ENCODE measurements at regions of chr2 and their contacts with region 1.

Region 1: GRCh38 chr2:163155279-163155883 is 316.8 kb upstream of the KCNH7 start:
- DNase-seq: no peak
- H3K4me3 Mint-ChIP-seq: no peak overlapping the region
- H3K27ac Mint-ChIP-seq: no peak overlapping the region
- H3K4me1 Mint-ChIP-seq: no peaks in the 10 kb centered on the region
- H3K27me3 Mint-ChIP-seq: no peaks in the 10 kb centered on the region

Region 2: GRCh38 chr2:162430323-162430722 is 725.1 kb before region 1 on chr2:
- CTCF ChIA-PET with region 1: no interaction called
- intact Hi-C with region 1: no loop called
- DNase-seq: no peak
- H3K4me3 Mint-ChIP-seq: no peak overlapping the region
- H3K27ac Mint-ChIP-seq: no peak overlapping the region
- H3K4me1 Mint-ChIP-seq: no peaks in the 10 kb centered on the region
- H3K27me3 Mint-ChIP-seq: peaks cover 4% of the 10 kb centered on the region

Region 3: DNA sequence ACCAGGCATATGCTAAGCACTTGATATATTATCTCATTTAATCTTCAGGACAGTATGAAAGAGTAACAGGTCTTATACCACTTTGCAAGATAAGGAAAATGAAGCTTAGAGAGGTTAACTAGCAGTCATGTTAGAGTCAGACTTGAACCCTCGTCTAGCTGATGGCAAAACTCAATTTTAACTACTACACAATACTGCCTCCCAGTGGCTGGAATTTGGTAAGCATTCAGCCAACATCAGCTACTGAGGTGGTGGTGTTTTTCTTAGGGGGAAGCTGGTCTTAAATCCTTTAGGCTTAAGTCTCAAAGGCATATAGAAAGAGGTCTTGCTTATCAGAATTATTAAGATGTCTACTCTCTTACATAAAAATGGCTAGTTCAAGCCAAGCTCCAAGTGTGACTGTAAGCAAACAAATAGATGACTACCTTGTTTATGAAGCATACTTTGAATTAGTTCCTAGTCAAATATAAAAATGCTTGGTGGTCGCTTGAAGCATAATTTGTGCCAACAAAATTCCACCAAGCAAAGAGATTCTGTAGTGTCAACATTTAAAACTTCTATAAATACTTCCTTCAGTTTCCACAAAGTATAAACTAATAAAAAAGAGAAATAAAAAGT is 905.9 kb after region 1 on chr2:
- CTCF ChIA-PET with region 1: no interaction called
- intact Hi-C with region 1: loop called (anchors 10 kb)
- DNase-seq: no peak
- H3K4me3 Mint-ChIP-seq: no peak overlapping the region
- H3K27ac Mint-ChIP-seq: no peak overlapping the region
- H3K4me1 Mint-ChIP-seq: no peaks in the 10 kb centered on the region
- H3K27me3 Mint-ChIP-seq: no peaks in the 10 kb centered on the region

Measured in activated naive CD4-positive, alpha-beta T cell treated with anti-CD3 and anti-CD28 coated beads for 36 hours (primary cell).